ENCODE measurements at regions of chr17 and their contacts with region 1.

Region 1: GRCh38 chr17:50026901-50027630 is 28.8 kb upstream of the ITGA3 start:
- DNase-seq: peak; percentile 58
- H3K4me3 Mint-ChIP-seq: peak overlapping the region; percentile 33
- H3K27ac Mint-ChIP-seq: no peak overlapping the region
- H3K4me1 Mint-ChIP-seq: peaks cover 7% of the 10 kb centered on the region
- H3K27me3 Mint-ChIP-seq: peaks cover 11% of the 10 kb centered on the region

Region 2: DNA sequence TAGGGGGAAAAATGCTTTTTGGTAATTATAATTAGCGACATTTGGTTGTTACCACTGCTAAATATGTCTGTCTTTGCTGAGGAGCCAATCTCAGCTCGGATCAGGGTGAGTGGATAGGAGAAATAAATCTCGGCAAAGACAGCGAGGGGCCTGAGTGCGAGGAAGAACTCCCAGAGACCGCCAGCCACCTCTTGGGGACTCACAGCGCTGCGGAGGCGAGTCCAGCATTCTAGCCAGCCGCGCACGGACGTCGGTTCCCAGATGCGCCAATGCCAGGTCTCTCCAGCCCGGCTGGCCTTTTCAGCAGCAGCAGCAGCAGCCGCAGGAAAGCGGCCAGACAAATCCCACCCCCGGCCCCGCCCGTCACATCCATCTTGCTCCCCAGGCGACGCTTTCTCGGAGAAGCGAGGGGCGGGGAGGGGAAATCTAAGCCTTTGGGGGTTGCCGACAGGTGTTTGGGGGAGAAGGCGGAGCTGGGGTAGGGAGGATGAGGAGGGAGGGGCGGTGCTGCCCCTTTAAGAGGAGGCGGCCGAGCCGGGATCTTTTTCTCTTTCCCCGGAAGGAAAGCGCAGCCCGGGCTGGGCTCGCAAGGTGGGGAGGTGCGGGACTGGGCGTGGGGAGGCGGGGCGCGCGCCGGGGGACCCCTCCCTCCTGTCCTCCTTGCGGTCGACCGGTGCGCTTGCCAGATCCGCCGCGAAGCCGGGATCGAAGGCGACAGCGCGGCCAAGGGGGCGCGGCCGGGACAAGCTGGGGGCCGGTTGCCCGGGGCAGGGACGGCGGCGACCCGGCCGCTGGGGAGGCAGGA is 28.6 kb after region 1 on chr17 and contains the start of gene ITGA3:
- intact Hi-C with region 1: loop called (anchors 1 kb)
- DNase-seq: peak; percentile 56
- H3K4me3 Mint-ChIP-seq: peak within 1 kb of the TSS; percentile 88
- H3K27ac Mint-ChIP-seq: peak within 1 kb of the TSS; percentile 30
- H3K4me1 Mint-ChIP-seq: peaks cover 33% of the 10 kb centered on the region
- H3K27me3 Mint-ChIP-seq: peaks cover 12% of the 10 kb centered on the region
- total RNA-seq, gene ITGA3: 10.1 and 10.8 TPM in 2 replicates

Region 3: DNA sequence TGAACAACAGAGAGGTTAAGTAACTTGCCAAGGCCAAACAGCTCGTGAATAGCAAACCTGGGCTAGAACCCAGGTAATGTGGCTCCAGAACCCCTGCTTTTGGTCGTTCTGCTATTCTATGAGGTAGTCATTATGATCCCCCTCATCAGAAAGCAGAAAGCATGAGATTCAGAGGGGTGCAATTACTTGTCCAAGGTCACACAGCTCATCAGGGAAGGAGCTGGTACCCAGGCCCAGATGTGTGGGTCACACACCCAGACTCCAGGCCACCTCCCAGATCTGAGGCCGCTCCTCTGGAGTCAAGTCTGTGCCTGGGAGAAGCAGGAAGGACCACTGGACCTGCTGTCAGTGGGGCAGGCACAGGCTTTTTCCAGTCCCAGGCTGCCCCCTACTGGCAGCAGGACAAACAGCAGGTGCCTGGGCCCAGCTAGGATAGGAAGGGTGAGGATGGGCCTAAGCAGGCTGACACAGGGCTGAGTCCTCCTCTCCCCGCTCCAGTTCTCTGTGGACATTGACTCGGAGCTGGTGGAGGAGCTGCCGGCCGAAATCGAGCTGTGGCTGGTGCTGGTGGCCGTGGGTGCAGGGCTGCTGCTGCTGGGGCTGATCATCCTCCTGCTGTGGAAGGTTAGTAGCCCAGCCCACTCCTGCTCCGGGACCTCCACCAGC is 60.3 kb after region 1 on chr17:
- intact Hi-C with region 1: loop called (anchors 1 kb)
- DNase-seq: peak; percentile 70
- H3K4me3 Mint-ChIP-seq: no peak overlapping the region
- H3K27ac Mint-ChIP-seq: no peak overlapping the region
- H3K4me1 Mint-ChIP-seq: no peaks in the 10 kb centered on the region
- H3K27me3 Mint-ChIP-seq: no peaks in the 10 kb centered on the region

Region 4: GRCh38 chr17:50094753-50095619 is 67.9 kb after region 1 on chr17 and contains the start of gene PDK2:
- intact Hi-C with region 1: loop called (anchors 2 kb)
- DNase-seq: peak; percentile 95
- H3K4me3 Mint-ChIP-seq: peak within 1 kb of the TSS; percentile 86
- H3K27ac Mint-ChIP-seq: peak within 1 kb of the TSS; percentile 79
- H3K4me1 Mint-ChIP-seq: peaks cover 13% of the 10 kb centered on the region
- H3K27me3 Mint-ChIP-seq: no peaks in the 10 kb centered on the region
- total RNA-seq, gene PDK2: 11.0 and 12.1 TPM in 2 replicates

Region 5: GRCh38 chr17:50279181-50279526 is 252.1 kb after region 1 on chr17:
- intact Hi-C with region 1: no loop called
- DNase-seq: no peak
- H3K4me3 Mint-ChIP-seq: no peak overlapping the region
- H3K27ac Mint-ChIP-seq: no peak overlapping the region
- H3K4me1 Mint-ChIP-seq: peaks cover 41% of the 10 kb centered on the region
- H3K27me3 Mint-ChIP-seq: no peaks in the 10 kb centered on the region